Left cardiac atrium (tissue), 4 donors: ENCODE measurements at regions of chr10 and their contacts with region 1.

Region 1: DNA sequence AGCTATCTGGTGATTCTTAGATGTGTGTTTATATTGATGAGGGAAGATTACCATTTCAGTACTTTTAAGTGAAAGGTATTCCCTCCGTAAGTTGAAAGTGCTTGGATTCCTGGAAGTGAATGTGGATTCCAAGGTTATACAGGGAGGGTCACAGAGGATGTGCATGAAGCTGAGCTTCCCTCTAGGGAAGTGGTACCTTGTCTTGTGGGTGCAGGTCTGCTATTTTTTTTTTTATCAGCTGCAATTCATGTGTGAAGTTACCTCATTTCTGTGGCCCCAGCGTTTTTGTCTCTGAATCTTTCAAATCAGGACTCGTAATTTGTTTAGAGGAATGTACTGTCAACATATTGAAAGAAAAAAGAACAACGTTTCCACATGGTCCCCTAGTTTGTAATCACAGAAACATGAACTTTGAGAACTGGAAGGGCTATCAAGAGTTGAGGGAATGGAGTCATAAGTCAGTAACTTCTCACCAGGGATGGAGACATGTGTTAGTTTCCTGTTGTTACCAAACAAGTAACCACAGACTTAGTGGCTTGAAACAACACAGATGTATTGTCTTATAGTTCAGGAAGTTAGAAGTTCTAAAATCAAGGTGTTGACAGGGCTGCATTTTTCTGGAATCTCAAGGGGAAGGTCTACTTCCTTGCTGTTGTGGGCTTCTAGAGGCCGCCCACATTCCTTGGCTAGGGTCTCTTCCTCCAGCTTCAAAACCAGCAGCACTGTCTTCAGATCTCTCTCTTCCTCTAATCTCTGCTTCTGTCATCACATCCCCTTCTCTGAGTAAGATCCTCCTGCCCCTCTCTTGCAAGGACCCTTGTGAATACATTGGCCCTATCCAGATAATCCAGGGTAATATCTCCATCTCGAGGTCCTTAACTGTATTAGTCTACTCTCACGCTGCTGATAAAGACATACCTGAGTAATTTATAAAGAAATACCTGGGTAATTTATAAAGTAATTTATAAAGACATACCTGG is 64.4 kb downstream of the RAB18 start:
- DNase-seq: no peak
- ATAC-seq: peak in 1 of 2 donors; percentile 15

Region 2: DNA sequence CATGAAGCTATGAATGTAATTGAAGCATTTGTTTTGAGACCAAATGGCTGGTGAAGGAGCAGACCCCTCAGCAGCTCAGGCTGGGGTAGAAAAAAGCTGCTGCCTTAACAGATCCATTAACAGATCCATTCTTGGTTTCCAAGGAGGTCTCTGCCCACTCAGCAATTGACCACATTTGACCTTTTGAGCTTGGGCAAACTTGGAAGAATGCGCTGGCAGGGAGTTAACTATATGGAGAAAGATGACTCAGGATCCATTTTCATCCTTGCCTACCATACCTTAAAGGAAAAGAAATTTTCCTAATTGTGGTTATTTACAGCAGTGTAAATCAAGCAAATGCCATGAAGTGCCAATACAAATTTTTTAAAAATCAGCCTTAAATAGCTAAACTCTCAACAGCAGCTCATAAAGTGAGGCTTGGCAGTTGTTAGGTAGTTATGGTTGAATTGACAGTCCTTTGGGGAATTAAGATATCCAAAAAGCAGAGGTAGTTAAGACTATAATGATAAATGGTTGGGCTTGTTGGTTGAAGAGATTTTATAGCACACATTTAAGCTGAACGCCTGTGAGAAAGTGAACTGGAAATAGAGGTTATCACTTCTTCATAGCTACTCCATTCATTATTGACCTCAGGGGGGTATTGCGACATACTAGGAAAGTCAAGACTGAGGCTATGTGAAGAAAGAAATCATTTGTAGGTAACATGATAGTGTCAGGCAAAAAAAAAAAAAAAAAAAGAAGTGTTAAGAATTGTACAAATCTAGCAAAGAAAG is 93.2 kb after region 1 on chr10:
- intact Hi-C with region 1: loop called in 1 of 2 experiments (anchors 10 kb)
- DNase-seq: no peak
- ATAC-seq: no peak